IMR-90 (cell line): ENCODE measurements at regions of chr12 and their contacts with region 1.

Region 1: DNA sequence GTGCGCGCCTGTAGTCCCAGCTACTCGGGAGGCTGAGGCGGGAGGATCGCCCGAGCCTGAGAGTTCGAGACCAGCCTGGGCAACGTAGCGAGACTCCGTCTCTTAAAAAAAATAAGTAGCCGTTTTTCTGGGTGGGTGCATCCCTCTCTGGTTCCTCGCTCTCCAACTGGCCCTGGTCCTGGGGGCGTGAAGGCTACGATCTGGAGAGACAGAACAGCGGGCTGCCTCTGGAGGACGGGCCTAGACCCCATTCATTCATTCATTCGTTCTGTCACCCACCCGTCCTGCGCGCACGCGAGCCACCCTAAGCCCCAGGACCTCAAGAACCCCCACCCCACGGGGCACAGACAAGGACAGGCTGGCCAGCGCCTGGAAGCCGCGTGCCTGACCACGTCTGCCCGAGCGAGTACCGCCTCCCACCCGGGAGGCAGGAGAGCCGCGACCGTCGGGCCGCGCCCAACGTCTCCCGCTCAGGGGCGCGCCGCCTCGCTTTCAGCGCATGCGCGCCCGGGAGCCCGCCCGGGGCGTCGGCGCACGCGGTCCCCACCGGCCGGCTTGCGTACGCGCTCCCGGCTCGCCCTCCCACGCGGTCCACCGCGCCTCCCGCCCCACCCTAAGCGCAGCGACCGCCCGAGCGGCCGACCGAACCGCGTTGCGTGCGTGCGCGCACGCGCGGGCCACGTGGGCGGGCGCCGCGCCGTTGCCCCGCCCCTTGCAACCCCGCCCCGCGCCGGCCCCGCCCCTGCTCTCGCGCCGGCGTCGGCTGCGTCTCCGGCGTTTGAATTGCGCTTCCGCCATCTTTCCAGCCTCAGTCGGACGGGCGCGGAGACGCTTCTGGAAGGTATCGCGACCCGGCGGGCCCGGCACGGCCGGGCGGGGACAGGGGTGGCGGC is at the start of gene RAN:
- DNase-seq: peak; percentile 92
- ATAC-seq: peak; percentile 92
- H3K4me3 ChIP-seq: peak within 1 kb of the TSS; percentile 90
- H3K27ac ChIP-seq: peak within 1 kb of the TSS; percentile 84
- H3K4me1 ChIP-seq: no peaks in the 10 kb centered on the region
- H3K27me3 ChIP-seq: no peaks in the 10 kb centered on the region
- CTCF ChIP-seq: no peak
- POLR2A ChIP-seq: peak; percentile 86
- RAD21 ChIP-seq: no peak
- total RNA-seq, gene RAN: 898 and 910 TPM in 2 replicates

Region 2: DNA sequence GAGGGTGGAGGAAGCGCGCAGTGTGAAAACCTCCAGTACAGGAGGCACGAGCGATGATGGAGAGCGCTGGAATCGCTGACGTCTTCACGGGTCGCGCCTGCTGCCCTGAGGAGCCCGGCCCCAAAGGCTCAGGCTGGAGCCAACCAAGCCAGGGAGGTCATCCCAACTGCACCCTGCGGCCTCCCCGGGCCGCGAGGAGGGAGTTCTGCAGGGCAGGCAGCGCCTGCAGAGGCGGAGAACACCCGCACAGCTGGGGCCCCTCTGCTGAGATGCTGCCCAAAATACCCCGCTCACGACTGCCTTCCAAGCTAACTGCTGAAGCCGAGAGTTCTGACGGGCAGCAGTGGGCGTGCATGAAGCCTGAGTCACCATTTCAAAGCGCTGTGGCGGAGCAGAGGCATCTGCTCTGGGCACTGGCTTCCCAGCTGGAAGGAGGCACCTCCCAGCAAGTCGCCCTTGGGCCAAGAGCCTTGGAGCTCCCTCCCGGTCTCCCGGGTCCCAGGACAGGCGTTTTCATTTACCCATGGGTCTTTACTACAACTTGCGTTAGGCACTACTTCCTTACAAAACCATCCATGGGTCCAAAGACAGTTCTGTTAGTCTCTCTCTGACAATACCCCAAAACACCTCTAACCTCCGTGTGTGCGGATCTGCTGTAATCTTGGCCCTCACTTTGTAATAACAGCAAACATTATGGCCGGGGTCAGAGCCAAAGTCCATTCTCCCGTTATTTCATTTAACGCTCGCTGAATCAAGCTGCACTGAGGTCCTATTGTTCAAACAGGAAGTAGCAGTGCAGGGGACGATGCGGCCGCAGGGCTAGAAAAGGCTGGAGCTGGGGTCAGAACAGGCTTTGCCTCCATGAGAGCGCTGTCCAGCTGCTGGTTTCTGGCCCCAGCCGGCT is 95.3 kb before region 1 on chr12:
- CTCF ChIA-PET with region 1: no interaction called
- POLR2A ChIA-PET with region 1: no interaction called
- dilution Hi-C with region 1: no loop called
- in situ Hi-C with region 1: no loop called
- intact Hi-C with region 1: loop called (anchors 5 kb)
- DNase-seq: peak; percentile 88
- ATAC-seq: peak; percentile 93
- H3K4me3 ChIP-seq: peak overlapping the region; percentile 15
- H3K27ac ChIP-seq: no peak overlapping the region
- H3K4me1 ChIP-seq: no peaks in the 10 kb centered on the region; the same call in 1 of the 2 replicates
- H3K27me3 ChIP-seq: no peaks in the 10 kb centered on the region; the same call in 1 of the 2 replicates
- CTCF ChIP-seq: no peak
- POLR2A ChIP-seq: no peak
- RAD21 ChIP-seq: peak; percentile 5; the same call in 1 of the 2 replicates

Region 3: DNA sequence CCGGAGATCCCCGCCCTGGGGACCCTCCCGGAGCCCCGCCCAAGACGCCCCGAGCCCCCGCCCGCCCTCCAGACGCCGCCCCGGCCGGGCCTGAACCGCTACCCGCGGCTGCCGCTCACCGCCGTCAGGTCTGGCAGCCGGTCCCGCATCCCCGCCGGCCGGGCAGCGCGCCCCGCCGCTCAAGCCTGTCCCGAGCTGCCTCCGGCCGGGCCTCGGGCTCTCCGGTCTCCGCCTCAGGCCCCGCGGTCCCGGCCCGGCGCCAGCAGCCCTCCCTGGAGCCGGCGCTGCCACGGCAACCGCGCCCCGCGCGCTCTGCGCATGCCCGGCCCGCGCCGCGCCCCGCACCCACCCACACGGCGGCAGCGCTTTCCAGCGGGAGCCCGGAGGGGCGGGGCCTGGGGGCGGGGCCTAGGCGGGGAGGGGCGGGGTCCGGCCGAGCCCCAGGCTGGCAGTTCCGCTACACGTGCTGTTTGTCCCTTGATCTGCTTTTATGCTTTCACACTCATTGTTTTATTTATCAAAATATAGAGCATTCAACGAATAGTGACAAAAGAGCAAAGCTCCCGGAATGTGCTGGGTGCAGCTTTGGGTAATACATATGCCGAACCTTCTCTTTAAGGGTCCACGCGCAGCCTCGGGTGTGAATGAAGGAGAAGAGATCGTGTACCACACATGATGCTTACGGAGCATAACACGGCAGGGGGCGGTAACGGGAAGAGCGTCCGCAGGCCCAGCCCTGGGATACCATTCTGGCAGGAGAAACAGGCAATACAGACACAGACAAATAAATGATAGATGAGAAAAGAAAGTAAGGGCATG is 32.4 kb before region 1 on chr12 and contains the start of gene STX2:
- CTCF ChIA-PET with region 1: no interaction called
- POLR2A ChIA-PET with region 1: no interaction called
- dilution Hi-C with region 1: no loop called
- in situ Hi-C with region 1: no loop called
- intact Hi-C with region 1: loop called (anchors 1 kb)
- DNase-seq: peak; percentile 74
- ATAC-seq: peak; percentile 98
- H3K4me3 ChIP-seq: peak within 1 kb of the TSS; percentile 96
- H3K27ac ChIP-seq: peak within 1 kb of the TSS; percentile 28
- H3K4me1 ChIP-seq: peaks cover 6% of the 10 kb centered on the region; the same call in 1 of the 2 replicates
- H3K27me3 ChIP-seq: no peaks in the 10 kb centered on the region
- CTCF ChIP-seq: peak; percentile 44
- POLR2A ChIP-seq: no peak
- RAD21 ChIP-seq: peak; percentile 42
- total RNA-seq, gene STX2: 26.9 and 42.8 TPM in 2 replicates

Region 4: DNA sequence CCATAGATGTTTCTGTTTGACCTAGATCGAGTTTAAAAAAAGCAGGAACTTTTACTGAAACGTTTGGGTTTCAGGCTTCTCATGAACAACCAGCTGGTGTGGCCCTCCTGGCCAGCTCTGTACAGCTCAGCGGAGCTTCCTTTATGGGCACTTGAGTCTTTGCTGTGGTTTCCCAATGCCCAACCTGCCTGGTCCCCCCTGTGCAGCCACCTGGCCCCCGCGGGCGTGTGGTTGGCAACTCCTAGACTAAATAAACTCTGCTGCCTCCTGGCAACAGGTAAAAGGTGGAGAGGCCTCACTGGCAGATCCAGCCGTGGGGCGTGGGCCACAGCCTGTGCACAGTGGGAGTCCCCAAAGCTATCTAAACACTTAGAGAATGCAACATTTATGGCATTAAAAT is 120.9 kb after region 1 on chr12:
- CTCF ChIA-PET with region 1: no interaction called
- POLR2A ChIA-PET with region 1: no interaction called
- dilution Hi-C with region 1: no loop called
- in situ Hi-C with region 1: no loop called
- intact Hi-C with region 1: no loop called
- DNase-seq: no peak
- ATAC-seq: no peak
- H3K4me3 ChIP-seq: no peak overlapping the region
- H3K27ac ChIP-seq: no peak overlapping the region
- H3K4me1 ChIP-seq: no peaks in the 10 kb centered on the region
- H3K27me3 ChIP-seq: no peaks in the 10 kb centered on the region
- CTCF ChIP-seq: no peak
- POLR2A ChIP-seq: no peak
- RAD21 ChIP-seq: no peak

Region 5: DNA sequence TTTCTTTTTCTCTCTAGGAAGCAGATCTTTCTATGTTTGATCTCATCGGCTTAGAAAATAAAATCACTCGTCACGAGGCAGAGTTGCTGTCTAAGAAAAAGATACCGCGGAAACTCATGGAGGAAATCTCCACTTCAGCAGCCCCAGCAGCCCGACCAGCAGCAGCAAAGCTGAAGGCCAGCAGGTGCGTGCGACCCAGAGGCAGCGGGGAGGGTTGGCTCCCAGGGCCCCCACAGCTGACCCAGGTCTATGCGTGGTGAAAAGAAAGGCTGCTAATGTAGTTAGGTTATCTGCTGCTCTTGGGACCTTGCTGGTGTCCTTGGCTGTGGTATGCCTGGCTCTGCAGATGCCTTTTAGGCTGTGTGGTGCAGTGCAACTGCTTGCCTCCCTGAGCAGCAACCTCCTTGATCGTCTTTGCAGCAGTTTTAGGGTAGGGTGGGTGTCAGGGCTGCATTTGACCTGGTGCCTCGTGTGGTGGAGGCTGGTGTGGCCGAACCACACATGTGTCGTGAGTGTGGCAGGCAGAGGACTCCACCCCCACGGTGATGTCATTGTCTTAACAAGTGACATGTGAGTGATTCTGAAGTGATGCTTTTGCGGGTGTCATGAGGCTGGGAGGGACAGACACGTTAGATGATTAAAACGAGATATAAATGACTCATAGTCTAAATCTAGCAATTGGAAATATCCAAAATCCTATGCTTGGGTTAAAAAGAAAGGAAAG is 1146.8 kb after region 1 on chr12:
- CTCF ChIA-PET with region 1: no interaction called
- POLR2A ChIA-PET with region 1: interaction called, 12 read pairs
- dilution Hi-C with region 1: no loop called
- in situ Hi-C with region 1: no loop called
- intact Hi-C with region 1: no loop called
- DNase-seq: peak; percentile 24
- ATAC-seq: no peak
- H3K4me3 ChIP-seq: no peak overlapping the region
- H3K27ac ChIP-seq: no peak overlapping the region
- H3K4me1 ChIP-seq: peaks cover 5% of the 10 kb centered on the region
- H3K27me3 ChIP-seq: no peaks in the 10 kb centered on the region
- CTCF ChIP-seq: no peak
- POLR2A ChIP-seq: no peak
- RAD21 ChIP-seq: no peak